ENCODE measurements at regions of chr9 and their contacts with region 1.

Region 1: DNA sequence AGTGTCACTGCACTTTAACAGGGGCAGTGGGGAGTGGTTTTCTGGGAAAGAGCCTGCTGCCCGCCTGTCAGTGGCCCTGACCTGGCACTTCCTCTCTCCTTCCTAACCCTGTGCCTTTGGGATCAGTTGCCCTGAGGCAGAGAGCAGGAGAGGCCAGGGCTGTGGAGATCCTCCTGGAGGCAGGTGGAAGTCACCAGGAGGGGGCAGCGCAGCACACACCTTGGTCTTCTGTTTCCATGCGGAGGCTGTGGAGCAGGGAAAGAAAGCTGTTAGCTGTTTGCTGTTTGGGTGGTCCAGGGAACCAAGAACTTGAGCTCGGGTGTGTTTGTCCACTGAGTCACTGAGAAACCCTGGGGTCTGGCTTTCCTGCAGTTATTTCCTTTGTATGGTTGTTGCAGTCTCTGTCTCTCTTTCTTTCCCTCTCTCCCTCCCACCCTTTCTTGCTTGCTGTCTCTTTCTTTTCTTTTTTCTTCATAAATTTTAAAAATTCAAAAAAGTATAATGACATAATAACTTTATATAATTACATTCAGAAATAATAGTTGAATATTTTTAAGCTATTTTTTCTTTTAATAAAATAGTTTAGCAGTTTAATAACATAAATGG is 28.1 kb downstream of the NTRK2 start:
- DNase-seq: peak; percentile 80 to 90
- H3K4me3 ChIP-seq: no peak overlapping the region
- H3K27ac ChIP-seq: no peak overlapping the region
- H3K4me1 ChIP-seq: peaks cover 0 to 6% (median 0%) of the 10 kb centered on the region in 4 experiments; a peak in 4 of 7 replicates
- H3K27me3 ChIP-seq: no peaks in the 10 kb centered on the region
- CTCF ChIP-seq: peak; percentile 90 to 95 (median 90)
- EP300 ChIP-seq: no peak; a peak in 1 of 3 replicates
- POLR2A ChIP-seq: no peak
- RAD21 ChIP-seq: peak; percentile 95 to 97

Region 2: DNA sequence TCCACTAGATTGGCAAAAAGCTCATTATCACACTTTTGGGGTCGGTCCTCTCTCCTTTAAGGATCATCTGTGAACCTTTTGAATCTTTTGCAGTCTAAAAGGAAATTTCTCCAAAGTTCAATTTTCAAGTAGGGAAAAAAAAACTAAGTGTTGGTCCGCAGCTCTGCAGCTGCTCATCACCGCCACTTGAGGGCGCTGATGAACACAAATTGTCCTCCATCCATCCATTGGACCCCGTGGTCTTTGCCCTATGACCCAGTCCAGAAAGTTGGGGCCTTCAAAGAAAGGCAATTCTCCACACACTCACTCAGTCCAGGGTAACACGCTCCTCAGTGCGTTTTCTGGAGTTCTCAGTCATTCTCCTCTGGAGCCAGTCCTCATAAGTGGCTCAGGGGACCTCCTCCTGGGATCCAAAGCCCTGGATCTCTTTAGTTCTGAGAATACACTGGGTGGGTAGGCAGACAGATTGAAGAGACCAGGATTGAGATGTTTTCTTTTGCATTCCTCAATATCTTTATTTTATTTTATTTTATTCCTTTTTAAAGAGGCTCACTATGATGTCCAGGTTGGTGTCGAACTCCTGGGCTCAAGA is 293.4 kb before region 1 on chr9:
- CTCF ChIA-PET with region 1: interaction called, 11 read pairs
- POLR2A ChIA-PET with region 1: no interaction called
- DNase-seq: peak in 1 of 2 experiments; percentile 52
- H3K4me3 ChIP-seq: no peak overlapping the region
- H3K27ac ChIP-seq: no peak overlapping the region
- H3K4me1 ChIP-seq: no peaks in the 10 kb centered on the region
- H3K27me3 ChIP-seq: no peaks in the 10 kb centered on the region
- CTCF ChIP-seq: peak; percentile 72 to 80 (median 76)
- EP300 ChIP-seq: no peak
- POLR2A ChIP-seq: no peak
- RAD21 ChIP-seq: peak; percentile 83 to 84

Region 3: GRCh38 chr9:84481636-84482218 is 215.9 kb before region 1 on chr9:
- CTCF ChIA-PET with region 1: no interaction called
- POLR2A ChIA-PET with region 1: no interaction called
- DNase-seq: no peak
- H3K4me3 ChIP-seq: no peak overlapping the region
- H3K27ac ChIP-seq: no peak overlapping the region
- H3K4me1 ChIP-seq: no peaks in the 10 kb centered on the region
- H3K27me3 ChIP-seq: no peaks in the 10 kb centered on the region
- CTCF ChIP-seq: no peak
- EP300 ChIP-seq: no peak
- POLR2A ChIP-seq: no peak
- RAD21 ChIP-seq: no peak

Region 4: DNA sequence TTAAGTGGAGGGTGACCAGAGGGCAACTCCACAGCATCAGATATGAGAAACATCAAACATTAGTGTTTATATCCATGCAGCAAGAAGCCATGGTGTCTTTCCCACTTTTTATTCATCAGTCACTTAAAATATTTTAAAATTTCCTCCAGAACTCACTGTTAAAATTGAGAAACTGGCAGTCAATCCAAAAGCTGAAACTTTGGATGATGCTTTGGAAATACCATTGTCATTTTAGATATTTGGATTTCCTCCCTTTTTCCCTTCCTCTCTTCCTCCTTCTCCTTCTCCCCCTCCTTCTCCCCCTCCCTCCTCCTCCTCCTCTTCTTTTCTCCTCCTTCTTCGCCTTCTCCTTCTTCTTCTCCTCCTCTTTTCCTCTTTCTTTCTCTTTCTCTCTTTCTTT is 61.2 kb before region 1 on chr9:
- CTCF ChIA-PET with region 1: no interaction called
- POLR2A ChIA-PET with region 1: no interaction called
- DNase-seq: no peak
- H3K4me3 ChIP-seq: no peak overlapping the region
- H3K27ac ChIP-seq: no peak overlapping the region
- H3K4me1 ChIP-seq: no peaks in the 10 kb centered on the region
- H3K27me3 ChIP-seq: no peaks in the 10 kb centered on the region
- CTCF ChIP-seq: no peak
- EP300 ChIP-seq: no peak
- POLR2A ChIP-seq: no peak
- RAD21 ChIP-seq: no peak

Region 5: DNA sequence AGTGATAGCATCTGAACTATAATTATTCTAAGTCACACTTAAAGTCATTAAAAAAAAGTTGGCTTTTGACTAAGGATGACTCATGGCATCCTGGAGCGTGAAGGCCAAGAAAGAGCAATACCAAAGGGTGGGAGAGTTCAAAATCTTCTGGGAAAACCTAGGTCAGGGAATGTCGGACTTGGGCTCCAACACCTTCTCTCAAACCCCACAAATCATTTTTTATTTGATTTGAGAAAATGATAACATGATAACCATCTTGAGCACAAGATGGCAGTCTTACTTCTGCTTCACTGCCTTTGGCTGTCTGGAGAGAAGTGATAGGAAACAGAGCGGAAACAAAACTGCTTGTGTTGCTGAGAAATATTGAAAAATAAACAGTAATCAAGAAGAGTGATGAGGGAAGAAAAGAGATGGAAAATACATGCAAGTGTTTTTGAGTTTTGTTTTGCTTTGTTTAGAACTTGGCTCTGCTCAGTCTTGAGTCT is 45.0 kb before region 1 on chr9:
- CTCF ChIA-PET with region 1: no interaction called
- POLR2A ChIA-PET with region 1: no interaction called
- DNase-seq: no peak
- H3K4me3 ChIP-seq: no peak overlapping the region
- H3K27ac ChIP-seq: no peak overlapping the region
- H3K4me1 ChIP-seq: no peaks in the 10 kb centered on the region
- H3K27me3 ChIP-seq: no peaks in the 10 kb centered on the region
- CTCF ChIP-seq: no peak
- EP300 ChIP-seq: no peak
- POLR2A ChIP-seq: no peak
- RAD21 ChIP-seq: peak; percentile 7 to 37; a peak in 3 of 4 replicates

Region 6: DNA sequence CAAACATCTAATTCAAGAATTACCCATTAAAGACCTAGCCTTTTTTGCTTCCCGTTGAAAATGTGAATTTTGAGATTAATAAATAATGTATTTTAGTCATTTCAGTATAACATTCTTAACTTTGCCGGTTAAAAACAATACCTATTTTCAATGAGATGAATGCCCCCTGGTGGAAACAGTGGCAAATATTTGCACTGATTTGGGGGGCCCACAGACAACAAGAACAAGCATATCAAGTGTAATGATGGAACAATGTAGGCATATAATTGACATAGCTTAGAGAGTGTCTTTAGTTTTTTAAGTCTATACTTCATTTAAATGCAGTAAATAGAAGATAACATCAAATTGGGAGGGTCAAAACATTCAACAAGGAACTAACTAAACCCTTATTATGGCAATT is 83.8 kb after region 1 on chr9:
- CTCF ChIA-PET with region 1: interaction called, 84 read pairs
- POLR2A ChIA-PET with region 1: no interaction called
- DNase-seq: no peak
- H3K4me3 ChIP-seq: no peak overlapping the region
- H3K27ac ChIP-seq: no peak overlapping the region
- H3K4me1 ChIP-seq: no peaks in the 10 kb centered on the region
- H3K27me3 ChIP-seq: no peaks in the 10 kb centered on the region
- CTCF ChIP-seq: peak in 2 of 3 experiments; percentile 49 to 51; a peak in 2 of 4 replicates
- EP300 ChIP-seq: no peak
- POLR2A ChIP-seq: no peak
- RAD21 ChIP-seq: peak; percentile 64 to 69

Region 7: DNA sequence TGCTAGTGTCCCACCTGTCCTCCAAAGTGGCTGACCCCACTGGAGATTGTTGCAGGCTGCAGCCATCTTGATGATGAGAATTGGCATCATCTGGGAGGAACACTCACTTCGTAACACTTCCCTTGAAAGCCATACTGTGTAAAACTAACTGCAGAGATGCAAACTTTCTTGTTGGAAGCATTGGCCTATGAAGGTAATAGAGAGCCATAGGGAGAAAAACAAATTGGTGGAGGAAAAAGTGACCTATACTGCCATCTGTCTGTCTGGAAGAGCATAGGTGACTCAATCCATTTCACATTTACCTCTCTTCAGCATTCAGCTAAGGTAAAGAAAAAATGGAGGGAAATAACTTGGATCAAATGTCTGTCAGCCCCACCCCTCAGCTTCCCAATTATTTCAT is 445.4 kb after region 1 on chr9:
- CTCF ChIA-PET with region 1: interaction called, 11 read pairs
- POLR2A ChIA-PET with region 1: no interaction called
- DNase-seq: no peak
- H3K4me3 ChIP-seq: no peak overlapping the region
- H3K27ac ChIP-seq: no peak overlapping the region
- H3K4me1 ChIP-seq: peaks cover 0 to 6% (median 0%) of the 10 kb centered on the region in 4 experiments; a peak in 1 of 7 replicates
- H3K27me3 ChIP-seq: no peaks in the 10 kb centered on the region
- CTCF ChIP-seq: peak in 2 of 3 experiments; percentile 46 to 72; a peak in 2 of 4 replicates
- EP300 ChIP-seq: no peak
- POLR2A ChIP-seq: no peak
- RAD21 ChIP-seq: peak; percentile 72 to 73

Measured in H1 (cell line).